Endothelial cell of umbilical vein (primary cell): ENCODE measurements at regions of chr10 and their contacts with region 1.

Region 1: DNA sequence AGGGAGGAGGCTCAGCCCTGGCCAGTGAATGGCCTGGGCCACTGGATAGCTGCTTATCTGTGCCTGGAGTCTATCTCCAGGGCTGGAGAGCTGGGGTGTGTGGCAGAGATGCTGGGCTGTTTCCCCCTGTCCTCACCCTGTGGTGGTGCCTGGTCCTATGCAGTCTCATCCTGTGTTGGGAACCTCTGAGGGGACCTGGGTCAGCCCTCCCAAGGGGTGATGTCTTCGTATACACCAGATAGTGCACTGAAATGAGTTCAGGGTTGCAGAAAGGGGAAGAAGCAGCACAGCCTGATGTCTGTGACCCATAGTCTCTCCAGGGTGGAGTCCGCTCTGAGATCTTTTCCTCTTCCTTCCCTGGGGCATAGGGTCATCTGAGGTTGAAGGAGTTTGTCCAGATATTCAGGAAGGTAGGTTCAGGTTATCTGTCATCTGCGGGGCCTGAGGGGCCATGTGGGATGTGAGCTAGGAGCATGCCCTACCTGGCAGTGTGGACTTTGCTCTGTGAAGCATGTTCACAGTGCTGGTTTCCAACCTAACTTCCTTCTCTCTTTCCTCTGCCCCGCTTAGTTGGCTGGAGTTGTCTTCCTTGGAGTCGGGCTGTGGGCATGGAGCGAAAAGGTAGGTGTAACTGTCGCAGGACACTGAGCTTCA is 33.4 kb upstream of the SH2D4B start:
- DNase-seq: no peak
- H3K4me3 ChIP-seq: no peak overlapping the region
- H3K27ac ChIP-seq: peak overlapping the region; percentile 96
- H3K4me1 ChIP-seq: peaks cover 94% of the 10 kb centered on the region
- H3K27me3 ChIP-seq: no peaks in the 10 kb centered on the region
- CTCF ChIP-seq: no peak
- POLR2A ChIP-seq: no peak

Region 2: GRCh38 chr10:80371460-80371859 is 132.8 kb before region 1 on chr10:
- CTCF ChIA-PET with region 1: no interaction called
- POLR2A ChIA-PET with region 1: no interaction called
- dilution Hi-C with region 1: no loop called
- intact Hi-C with region 1: no loop called
- DNase-seq: no peak
- H3K4me3 ChIP-seq: no peak overlapping the region
- H3K27ac ChIP-seq: no peak overlapping the region
- H3K4me1 ChIP-seq: no peaks in the 10 kb centered on the region
- H3K27me3 ChIP-seq: peaks cover 2 to 3% of the 10 kb centered on the region in 2 experiments
- CTCF ChIP-seq: no peak
- POLR2A ChIP-seq: no peak

Region 3: GRCh38 chr10:80408242-80409101 is 95.8 kb before region 1 on chr10 and contains the start of gene PRXL2A:
- CTCF ChIA-PET with region 1: interaction called, 11 read pairs
- POLR2A ChIA-PET with region 1: interaction called, 6 read pairs
- dilution Hi-C with region 1: no loop called
- intact Hi-C with region 1: loop called (anchors 1 kb)
- DNase-seq: peak; percentile 90
- H3K4me3 ChIP-seq: peak within 1 kb of the TSS; percentile 81 to 89 (median 87)
- H3K27ac ChIP-seq: peak within 1 kb of the TSS; percentile 93
- H3K4me1 ChIP-seq: peaks cover 42% of the 10 kb centered on the region
- H3K27me3 ChIP-seq: no peaks in the 10 kb centered on the region
- CTCF ChIP-seq: peak in 1 of 2 donors; percentile 4
- POLR2A ChIP-seq: peak; percentile 90
- total RNA-seq, gene PRXL2A: 290 and 321 TPM in 2 replicates

Region 4: DNA sequence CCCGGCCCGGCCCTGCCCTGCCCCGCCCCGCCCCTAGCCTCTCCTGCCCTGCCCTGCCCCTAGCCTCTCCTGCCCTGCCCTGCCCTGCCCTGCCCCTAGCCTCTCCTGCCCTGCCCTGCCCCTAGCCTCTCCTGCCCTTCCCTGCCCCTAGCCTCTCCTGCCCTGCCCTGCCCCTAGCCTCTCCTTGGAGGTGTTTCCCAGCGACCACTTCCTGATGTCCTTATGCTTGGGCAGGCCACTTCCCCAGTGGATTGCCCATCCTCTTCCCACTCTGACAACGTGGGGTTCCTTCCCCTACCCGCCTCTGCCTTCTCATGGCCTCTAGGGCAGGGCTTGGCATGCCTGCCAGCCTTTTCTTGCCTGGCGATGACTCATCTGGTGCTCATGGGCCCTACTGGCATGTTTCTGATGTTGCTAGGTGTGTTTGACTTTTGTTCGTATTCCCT is 74.7 kb before region 1 on chr10:
- CTCF ChIA-PET with region 1: interaction called, 21 read pairs
- POLR2A ChIA-PET with region 1: no interaction called
- dilution Hi-C with region 1: no loop called
- intact Hi-C with region 1: no loop called
- DNase-seq: no peak
- H3K4me3 ChIP-seq: no peak overlapping the region
- H3K27ac ChIP-seq: no peak overlapping the region
- H3K4me1 ChIP-seq: no peaks in the 10 kb centered on the region
- H3K27me3 ChIP-seq: no peaks in the 10 kb centered on the region
- CTCF ChIP-seq: no peak
- POLR2A ChIP-seq: no peak

Region 5: DNA sequence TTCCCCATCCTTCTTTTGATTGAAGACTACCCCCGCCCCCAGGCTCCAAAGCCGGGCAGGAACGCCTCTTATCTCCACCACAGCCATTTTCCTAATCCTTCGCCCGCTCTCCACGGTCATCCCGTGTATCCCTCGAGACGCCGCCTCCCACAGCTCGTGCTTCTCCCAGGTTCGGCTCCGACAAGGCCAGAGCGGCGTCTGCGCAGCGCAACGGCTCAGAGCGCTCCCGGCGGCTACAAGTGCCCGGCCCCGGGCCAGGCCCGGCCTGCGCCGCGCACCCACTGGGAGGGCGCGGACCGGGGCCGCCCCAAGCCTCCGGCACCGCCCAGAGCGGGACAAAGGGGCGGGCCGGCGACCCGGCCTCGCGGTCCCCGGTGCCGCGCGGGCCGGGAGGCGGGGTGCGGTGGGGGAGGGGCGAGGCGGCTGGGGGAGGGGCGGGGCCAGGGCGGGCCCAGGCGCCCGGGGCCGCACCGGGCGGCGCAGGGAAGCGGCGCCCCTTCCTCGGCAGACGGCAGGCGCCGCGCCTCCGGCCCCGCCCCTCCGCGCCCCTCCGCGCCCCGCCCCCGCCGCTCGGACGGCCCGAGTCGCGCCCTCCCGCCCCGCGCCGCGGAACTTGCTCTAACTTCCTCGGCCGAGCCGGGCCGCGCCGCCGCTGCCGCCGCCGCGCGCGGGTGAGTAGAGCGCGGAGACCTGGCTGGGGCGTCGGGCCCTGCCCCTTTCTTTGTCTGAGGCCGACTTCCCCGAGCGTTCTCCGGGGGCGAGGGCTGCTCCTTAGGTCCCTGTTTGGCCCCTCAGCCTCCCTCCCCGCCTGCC is 50.4 kb before region 1 on chr10 and contains the start of gene TSPAN14:
- CTCF ChIA-PET with region 1: interaction called, 1,118 read pairs
- POLR2A ChIA-PET with region 1: interaction called, 5 read pairs
- dilution Hi-C with region 1: no loop called
- intact Hi-C with region 1: loop called (anchors 1 kb)
- DNase-seq: peak; percentile 83
- H3K4me3 ChIP-seq: peak within 1 kb of the TSS; percentile 80 to 87 (median 83)
- H3K27ac ChIP-seq: peak within 1 kb of the TSS; percentile 86
- H3K4me1 ChIP-seq: peaks cover 40% of the 10 kb centered on the region
- H3K27me3 ChIP-seq: no peaks in the 10 kb centered on the region
- CTCF ChIP-seq: peak in 1 of 2 donors; percentile 3
- POLR2A ChIP-seq: peak; percentile 76
- total RNA-seq, gene TSPAN14: 237 and 242 TPM in 2 replicates

Region 6: DNA sequence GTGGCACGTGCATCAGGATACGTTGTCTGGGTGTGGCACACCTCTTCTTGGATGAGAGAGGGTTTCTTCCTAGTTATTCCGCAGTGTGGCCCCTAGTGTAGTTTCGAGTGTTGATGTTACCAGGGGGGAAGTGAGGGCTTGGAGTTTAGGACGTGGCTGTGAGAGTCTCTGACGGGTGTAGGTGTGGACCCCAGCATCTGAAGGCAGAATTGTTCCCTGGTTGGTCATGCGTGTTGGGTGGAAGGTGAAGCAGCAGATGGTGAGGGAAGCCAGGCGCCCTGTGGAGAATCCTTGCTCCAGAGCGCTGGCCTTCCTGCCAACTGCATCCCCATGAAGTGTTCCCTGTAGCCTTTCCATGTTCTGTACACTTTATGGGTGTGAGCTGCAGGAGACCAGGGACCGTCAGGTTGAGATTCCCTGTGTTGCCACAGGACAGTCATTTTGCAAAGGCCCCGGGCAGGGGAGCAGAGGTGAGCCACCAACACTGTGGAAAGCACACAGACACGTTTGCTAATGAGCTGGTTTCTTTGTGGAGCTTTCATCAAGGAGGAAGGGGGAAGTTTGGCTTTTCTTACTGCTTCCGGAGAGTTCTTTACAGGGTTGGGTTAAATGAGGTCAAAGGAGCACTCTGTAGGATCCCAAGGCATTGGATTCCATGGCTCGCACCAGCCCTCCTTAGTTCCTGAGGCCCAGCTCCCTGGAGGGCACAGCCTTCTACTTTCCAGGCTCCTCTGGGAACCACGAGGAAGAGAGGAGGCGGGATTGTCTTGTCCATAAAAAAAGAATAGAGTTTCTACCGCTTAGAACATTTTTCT is 18.1 kb before region 1 on chr10:
- CTCF ChIA-PET with region 1: interaction called, 36 read pairs
- POLR2A ChIA-PET with region 1: interaction called, 7 read pairs
- dilution Hi-C with region 1: no loop called
- intact Hi-C with region 1: no loop called
- DNase-seq: no peak
- H3K4me3 ChIP-seq: no peak overlapping the region
- H3K27ac ChIP-seq: no peak overlapping the region
- H3K4me1 ChIP-seq: peaks cover 36% of the 10 kb centered on the region
- H3K27me3 ChIP-seq: no peaks in the 10 kb centered on the region
- CTCF ChIP-seq: no peak
- POLR2A ChIP-seq: no peak

Region 7: DNA sequence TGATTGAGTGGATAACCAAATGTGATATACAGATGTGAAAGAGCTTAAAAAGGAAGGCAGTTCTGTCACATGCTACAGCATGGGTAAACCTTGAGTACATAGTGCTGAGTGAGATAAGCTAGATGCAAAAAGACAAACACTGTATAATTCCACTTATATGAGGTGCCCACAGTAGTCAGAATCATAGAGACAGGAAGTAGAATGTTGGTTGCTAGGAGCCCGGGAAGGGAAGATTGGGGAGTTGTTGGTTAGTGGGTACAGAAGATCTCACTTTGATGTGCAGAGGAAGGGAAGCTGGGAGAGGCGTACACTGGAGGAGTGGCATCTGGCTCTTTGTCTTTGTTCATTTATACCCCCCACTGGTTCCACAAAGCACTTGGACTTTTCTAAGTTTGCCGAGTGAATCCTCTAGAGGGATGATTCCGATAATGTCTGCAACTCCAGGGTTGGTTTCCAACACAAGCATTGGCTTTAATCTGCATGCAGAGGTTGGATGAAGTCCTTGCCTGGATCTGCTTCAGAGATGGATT is 10.7 kb before region 1 on chr10:
- CTCF ChIA-PET with region 1: interaction called, 36 read pairs
- POLR2A ChIA-PET with region 1: interaction called, 8 read pairs
- dilution Hi-C with region 1: no loop called
- intact Hi-C with region 1: loop called (anchors 1 kb)
- DNase-seq: no peak
- H3K4me3 ChIP-seq: no peak overlapping the region
- H3K27ac ChIP-seq: peak overlapping the region; percentile 13
- H3K4me1 ChIP-seq: peaks cover 72% of the 10 kb centered on the region
- H3K27me3 ChIP-seq: no peaks in the 10 kb centered on the region
- CTCF ChIP-seq: no peak
- POLR2A ChIP-seq: no peak

Region 8: GRCh38 chr10:80741278-80741677 is 237.0 kb after region 1 on chr10:
- CTCF ChIA-PET with region 1: no interaction called
- POLR2A ChIA-PET with region 1: no interaction called
- dilution Hi-C with region 1: no loop called
- intact Hi-C with region 1: no loop called
- DNase-seq: no peak
- H3K4me3 ChIP-seq: no peak overlapping the region
- H3K27ac ChIP-seq: no peak overlapping the region
- H3K4me1 ChIP-seq: no peaks in the 10 kb centered on the region
- H3K27me3 ChIP-seq: no peaks in the 10 kb centered on the region
- CTCF ChIP-seq: no peak
- POLR2A ChIP-seq: no peak

Region 9: DNA sequence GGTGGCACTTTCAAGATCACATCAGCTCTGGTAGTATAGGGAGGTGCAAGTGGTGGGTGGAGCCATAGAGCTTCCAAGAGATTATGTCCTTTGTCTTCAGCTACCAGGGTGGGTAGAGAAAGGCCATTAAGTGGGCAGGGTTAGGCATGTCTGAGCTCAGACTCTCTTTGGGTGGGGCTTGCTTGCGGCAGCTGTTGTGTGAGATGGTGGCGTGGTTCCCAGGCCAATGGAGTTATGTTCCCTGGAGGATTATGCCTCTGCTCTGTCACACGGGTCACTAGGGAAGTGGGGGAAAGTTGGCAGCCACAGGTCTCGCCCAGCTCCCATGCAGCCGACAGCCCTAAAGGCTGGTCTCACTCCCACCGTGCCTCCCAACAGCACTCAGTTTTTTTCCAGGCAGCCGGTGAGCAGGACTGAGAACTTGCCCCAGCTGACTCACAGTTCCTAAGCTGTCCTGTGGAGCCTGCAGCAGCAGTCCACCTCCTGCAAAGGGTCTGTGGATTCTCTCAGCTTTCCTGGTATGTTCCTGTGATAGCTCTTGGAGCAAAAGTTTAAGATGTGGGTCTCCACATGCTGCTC is 492.4 kb after region 1 on chr10:
- CTCF ChIA-PET with region 1: no interaction called
- POLR2A ChIA-PET with region 1: no interaction called
- dilution Hi-C with region 1: no loop called
- intact Hi-C with region 1: no loop called
- DNase-seq: no peak
- H3K4me3 ChIP-seq: no peak overlapping the region
- H3K27ac ChIP-seq: no peak overlapping the region
- H3K4me1 ChIP-seq: no peaks in the 10 kb centered on the region
- H3K27me3 ChIP-seq: no peaks in the 10 kb centered on the region
- CTCF ChIP-seq: no peak
- POLR2A ChIP-seq: no peak

Region 10: DNA sequence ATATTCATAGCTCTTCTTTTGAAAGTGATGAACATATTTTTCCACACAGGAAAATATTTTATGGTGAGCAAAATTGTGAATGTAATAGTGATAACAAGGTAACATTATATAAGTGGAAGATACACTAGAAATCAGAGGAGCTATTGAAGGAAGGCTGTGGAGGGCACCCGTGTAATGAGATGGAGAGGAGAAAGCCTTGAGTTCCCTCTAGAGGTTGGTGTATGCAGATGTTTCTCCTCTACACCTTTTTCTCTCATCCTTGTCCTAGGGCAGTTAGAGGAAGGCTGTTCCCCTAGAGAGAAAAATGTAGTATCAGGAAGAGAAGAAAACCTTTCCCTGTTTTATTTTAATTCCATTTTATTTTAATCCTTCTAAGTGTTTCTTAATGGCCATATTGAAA is 1316.1 kb after region 1 on chr10:
- CTCF ChIA-PET with region 1: no interaction called
- POLR2A ChIA-PET with region 1: no interaction called
- dilution Hi-C with region 1: no loop called
- intact Hi-C with region 1: no loop called
- DNase-seq: peak; percentile 7
- H3K4me3 ChIP-seq: no peak overlapping the region
- H3K27ac ChIP-seq: no peak overlapping the region
- H3K4me1 ChIP-seq: no peaks in the 10 kb centered on the region
- H3K27me3 ChIP-seq: no peaks in the 10 kb centered on the region
- CTCF ChIP-seq: peak in 1 of 2 donors; percentile 28
- POLR2A ChIP-seq: no peak